Activated CD8-positive, alpha-beta memory T cell treated with anti-CD3 and anti-CD28 coated beads, Interleukin-2, amount 10 ng/mL, durations not matched to agents 7 days and 5 days (primary cell): ENCODE measurements at regions of chr10 and their contacts with region 1.

Region 1: GRCh38 chr10:110354322-110354766 is 49.6 kb upstream of the SMNDC1 start:
- DNase-seq: peak; percentile 93
- ATAC-seq: peak; percentile 50
- H3K4me3 Mint-ChIP-seq: peak overlapping the region; percentile 57
- H3K27ac Mint-ChIP-seq: peak overlapping the region; percentile 99
- H3K4me1 Mint-ChIP-seq: peaks cover 62% of the 10 kb centered on the region
- H3K27me3 Mint-ChIP-seq: no peaks in the 10 kb centered on the region

Region 2: GRCh38 chr10:110311357-110311949 is 42.9 kb before region 1 on chr10:
- CTCF ChIA-PET with region 1: interaction called, 15 read pairs
- DNase-seq: peak; percentile 56
- ATAC-seq: peak; percentile 72
- H3K4me3 Mint-ChIP-seq: no peak overlapping the region
- H3K27ac Mint-ChIP-seq: peak overlapping the region; percentile 50
- H3K4me1 Mint-ChIP-seq: peaks cover 44% of the 10 kb centered on the region
- H3K27me3 Mint-ChIP-seq: no peaks in the 10 kb centered on the region

Region 3: GRCh38 chr10:110368002-110368401 is 13.7 kb after region 1 on chr10:
- CTCF ChIA-PET with region 1: interaction called, 52 read pairs
- DNase-seq: no peak
- ATAC-seq: peak; percentile 29
- H3K4me3 Mint-ChIP-seq: no peak overlapping the region
- H3K27ac Mint-ChIP-seq: peak overlapping the region; percentile 74
- H3K4me1 Mint-ChIP-seq: peaks cover 61% of the 10 kb centered on the region
- H3K27me3 Mint-ChIP-seq: no peaks in the 10 kb centered on the region

Region 4: GRCh38 chr10:110446954-110447608 is 92.7 kb after region 1 on chr10:
- CTCF ChIA-PET with region 1: interaction called, 17 read pairs
- DNase-seq: peak; percentile 39
- ATAC-seq: no peak
- H3K4me3 Mint-ChIP-seq: no peak overlapping the region
- H3K27ac Mint-ChIP-seq: peak overlapping the region; percentile 63
- H3K4me1 Mint-ChIP-seq: peaks cover 53% of the 10 kb centered on the region
- H3K27me3 Mint-ChIP-seq: no peaks in the 10 kb centered on the region

Region 5: GRCh38 chr10:110540031-110540430 is 185.7 kb after region 1 on chr10:
- CTCF ChIA-PET with region 1: interaction called, 50 read pairs
- DNase-seq: no peak
- ATAC-seq: no peak
- H3K4me3 Mint-ChIP-seq: no peak overlapping the region
- H3K27ac Mint-ChIP-seq: peak overlapping the region; percentile 22
- H3K4me1 Mint-ChIP-seq: peaks cover 32% of the 10 kb centered on the region
- H3K27me3 Mint-ChIP-seq: no peaks in the 10 kb centered on the region

Region 6: DNA sequence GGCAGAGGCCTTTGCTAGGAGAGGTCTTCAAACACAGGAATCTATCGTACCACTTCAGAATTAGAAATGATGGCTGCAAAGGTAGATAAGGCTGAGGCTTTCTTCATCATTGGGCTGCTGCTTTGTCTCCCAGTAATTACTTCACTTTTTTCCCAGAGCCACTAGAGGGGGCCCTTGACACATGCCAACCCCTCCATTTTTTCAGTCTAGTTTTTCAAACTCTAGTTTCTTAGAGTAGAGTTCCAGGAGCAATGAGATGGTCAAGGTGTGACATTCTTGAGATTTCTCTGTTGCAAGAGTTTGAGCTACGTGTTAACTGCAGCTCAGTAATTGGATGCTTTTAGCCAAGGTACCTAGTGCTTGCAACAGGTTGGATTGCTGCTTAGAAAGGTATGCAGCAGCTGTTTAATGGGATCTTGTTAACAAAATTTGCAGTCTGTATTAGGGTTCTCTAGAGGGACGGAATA is 256.0 kb after region 1 on chr10:
- CTCF ChIA-PET with region 1: no interaction called
- DNase-seq: peak; percentile 66
- ATAC-seq: peak; percentile 54
- H3K4me3 Mint-ChIP-seq: no peak overlapping the region
- H3K27ac Mint-ChIP-seq: no peak overlapping the region
- H3K4me1 Mint-ChIP-seq: peaks cover 43% of the 10 kb centered on the region
- H3K27me3 Mint-ChIP-seq: no peaks in the 10 kb centered on the region